ENCODE measurements at regions of chr6 and their contacts with region 1.

Region 1: DNA sequence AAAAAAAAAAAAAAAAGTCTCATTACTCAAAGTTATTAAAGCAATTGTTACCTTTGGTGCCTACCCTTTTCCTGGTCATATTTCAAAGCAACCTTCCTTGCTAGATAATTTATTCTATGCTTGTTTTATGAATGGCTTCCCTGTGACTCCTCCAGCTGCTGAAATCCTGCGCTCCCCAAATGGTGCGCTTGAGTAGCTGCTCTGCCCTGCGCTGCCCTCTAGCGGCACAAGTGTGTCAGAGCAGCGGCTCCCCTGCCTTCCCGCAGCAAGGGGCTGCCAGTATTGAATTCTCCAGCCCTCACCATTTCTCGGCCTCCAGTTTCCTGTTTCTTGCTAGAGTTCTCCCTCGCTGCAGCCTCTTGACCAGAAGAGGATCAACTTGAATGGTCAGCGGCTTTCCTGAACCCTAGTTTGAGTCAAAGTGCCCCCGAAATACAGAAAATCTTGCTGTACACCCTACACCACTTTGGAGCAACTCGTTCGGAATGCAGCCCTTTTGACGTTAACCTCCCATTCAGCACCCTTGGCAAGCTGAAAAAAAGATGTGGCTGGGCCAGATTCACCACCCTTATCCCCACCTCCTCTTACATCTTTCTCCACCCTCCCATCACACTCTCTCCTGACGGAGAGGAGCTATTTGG is 60.4 kb upstream of the KLHL31 start:
- DNase-seq: no peak
- H3K4me3 ChIP-seq: no peak overlapping the region
- H3K27ac ChIP-seq: no peak overlapping the region
- H3K4me1 ChIP-seq: no peaks in the 10 kb centered on the region
- H3K27me3 ChIP-seq: no peaks in the 10 kb centered on the region
- CTCF ChIP-seq: peak; percentile 80 to 90 (median 81)
- POLR2A ChIP-seq: no peak

Region 2: GRCh38 chr6:53179961-53180651 is 545.8 kb before region 1 on chr6:
- intact Hi-C with region 1: loop called (anchors 10 kb)
- DNase-seq: no peak
- H3K4me3 ChIP-seq: no peak overlapping the region
- H3K27ac ChIP-seq: no peak overlapping the region
- H3K4me1 ChIP-seq: no peaks in the 10 kb centered on the region
- H3K27me3 ChIP-seq: no peaks in the 10 kb centered on the region
- CTCF ChIP-seq: no peak
- POLR2A ChIP-seq: no peak

Region 3: GRCh38 chr6:53492860-53493634 is 232.9 kb before region 1 on chr6:
- intact Hi-C with region 1: loop called (anchors 5 kb)
- DNase-seq: no peak
- H3K4me3 ChIP-seq: no peak overlapping the region
- H3K27ac ChIP-seq: no peak overlapping the region
- H3K4me1 ChIP-seq: peaks cover 9% of the 10 kb centered on the region
- H3K27me3 ChIP-seq: no peaks in the 10 kb centered on the region
- CTCF ChIP-seq: peak; percentile 59 to 69 (median 66)
- POLR2A ChIP-seq: no peak